ENCODE measurements at regions of chr15 and their contacts with region 1.

Region 1: GRCh38 chr15:82139823-82140268 is 94.0 kb upstream of the MEX3B start:
- DNase-seq: peak; percentile 28
- H3K4me3 ChIP-seq: no peak overlapping the region; a peak in 1 of 4 replicates
- H3K27ac ChIP-seq: peak overlapping the region; percentile 19 to 48
- H3K4me1 ChIP-seq: peaks cover 3% of the 10 kb centered on the region in 2 experiments; a peak in 3 of 4 replicates
- H3K27me3 ChIP-seq: no peaks in the 10 kb centered on the region
- CTCF ChIP-seq: peak; percentile 80
- EP300 ChIP-seq: no peak
- RAD21 ChIP-seq: peak; percentile 82

Region 2: GRCh38 chr15:82018201-82018600 is 121.6 kb before region 1 on chr15:
- CTCF ChIA-PET with region 1: no interaction called
- POLR2A ChIA-PET with region 1: no interaction called
- DNase-seq: no peak
- H3K4me3 ChIP-seq: no peak overlapping the region
- H3K27ac ChIP-seq: no peak overlapping the region
- H3K4me1 ChIP-seq: peaks cover 0 to 30% of the 10 kb centered on the region in 2 experiments; a peak in 2 of 4 replicates
- H3K27me3 ChIP-seq: no peaks in the 10 kb centered on the region
- CTCF ChIP-seq: no peak
- EP300 ChIP-seq: no peak
- RAD21 ChIP-seq: no peak

Region 3: GRCh38 chr15:82100111-82100929 is 39.5 kb before region 1 on chr15:
- CTCF ChIA-PET with region 1: no interaction called
- POLR2A ChIA-PET with region 1: no interaction called
- DNase-seq: no peak
- H3K4me3 ChIP-seq: no peak overlapping the region
- H3K27ac ChIP-seq: no peak overlapping the region
- H3K4me1 ChIP-seq: 0 out of 4 replicates have a peak, but pooled peaks cover 0 to under 1% of the 10 kb centered on the region in 2 experiments
- H3K27me3 ChIP-seq: no peaks in the 10 kb centered on the region
- CTCF ChIP-seq: no peak
- EP300 ChIP-seq: no peak
- RAD21 ChIP-seq: no peak

Region 4: GRCh38 chr15:82129761-82130160 is 10.1 kb before region 1 on chr15:
- CTCF ChIA-PET with region 1: interaction called, 15 read pairs
- POLR2A ChIA-PET with region 1: no interaction called
- DNase-seq: no peak
- H3K4me3 ChIP-seq: no peak overlapping the region
- H3K27ac ChIP-seq: peak overlapping the region; percentile 92 to 94
- H3K4me1 ChIP-seq: peaks cover 26 to 36% of the 10 kb centered on the region in 2 experiments
- H3K27me3 ChIP-seq: no peaks in the 10 kb centered on the region
- CTCF ChIP-seq: no peak
- EP300 ChIP-seq: peak; percentile 54 to 70; a peak in 3 of 4 replicates
- RAD21 ChIP-seq: no peak

Region 5: GRCh38 chr15:82159922-82160321 is 20.1 kb after region 1 on chr15:
- CTCF ChIA-PET with region 1: interaction called, 12 read pairs
- POLR2A ChIA-PET with region 1: no interaction called
- DNase-seq: no peak
- H3K4me3 ChIP-seq: no peak overlapping the region
- H3K27ac ChIP-seq: peak overlapping the region; percentile 25 to 91; a peak in 3 of 4 replicates
- H3K4me1 ChIP-seq: peaks cover 6 to 8% of the 10 kb centered on the region in 2 experiments; a peak in 3 of 4 replicates
- H3K27me3 ChIP-seq: no peaks in the 10 kb centered on the region
- CTCF ChIP-seq: no peak
- EP300 ChIP-seq: peak in 1 of 2 experiments; percentile 81; a peak in 2 of 4 replicates
- RAD21 ChIP-seq: no peak

Measured in SK-N-SH (cell line).